Naive thymus-derived CD4-positive, alpha-beta T cell (primary cell): ENCODE measurements at regions of chr18 and their contacts with region 1.

Region 1: GRCh38 chr18:50307738-50308470 is 20.4 kb upstream of the CXXC1 start:
- DNase-seq: peak; percentile 70 to 93 (median 89)
- ATAC-seq: peak; percentile 96
- H3K4me3 ChIP-seq: peak overlapping the region; percentile 45
- H3K4me3 Mint-ChIP-seq: peak overlapping the region; percentile 76 to 97 (median 92)
- H3K27ac ChIP-seq: peak overlapping the region; percentile 65
- H3K27ac Mint-ChIP-seq: peak overlapping the region; percentile 52 to 93 (median 82)
- H3K4me1 ChIP-seq: peaks cover 0 to 8% of the 10 kb centered on the region in 2 donors
- H3K4me1 Mint-ChIP-seq: peaks cover 0 to 20% (median 16%) of the 10 kb centered on the region in 7 donors
- H3K27me3 ChIP-seq: peaks cover 0 to 3% of the 10 kb centered on the region in 2 donors
- H3K27me3 Mint-ChIP-seq: peaks cover 0 to 35% (median 19%) of the 10 kb centered on the region in 5 donors

Region 2: GRCh38 chr18:49319590-49319989 is 988.3 kb before region 1 on chr18:
- CTCF ChIA-PET with region 1: no interaction called
- POLR2A ChIA-PET with region 1: no interaction called
- intact Hi-C with region 1: no loop called
- DNase-seq: no peak
- ATAC-seq: no peak
- H3K4me3 ChIP-seq: no peak overlapping the region
- H3K4me3 Mint-ChIP-seq: no peak overlapping the region
- H3K27ac ChIP-seq: no peak overlapping the region
- H3K27ac Mint-ChIP-seq: peak overlapping the region in 1 of 9 donors; percentile 56
- H3K4me1 ChIP-seq: no peaks in the 10 kb centered on the region
- H3K4me1 Mint-ChIP-seq: peaks cover 0 to 15% (median 5%) of the 10 kb centered on the region in 7 donors
- H3K27me3 ChIP-seq: no peaks in the 10 kb centered on the region
- H3K27me3 Mint-ChIP-seq: no peaks in the 10 kb centered on the region

Region 3: DNA sequence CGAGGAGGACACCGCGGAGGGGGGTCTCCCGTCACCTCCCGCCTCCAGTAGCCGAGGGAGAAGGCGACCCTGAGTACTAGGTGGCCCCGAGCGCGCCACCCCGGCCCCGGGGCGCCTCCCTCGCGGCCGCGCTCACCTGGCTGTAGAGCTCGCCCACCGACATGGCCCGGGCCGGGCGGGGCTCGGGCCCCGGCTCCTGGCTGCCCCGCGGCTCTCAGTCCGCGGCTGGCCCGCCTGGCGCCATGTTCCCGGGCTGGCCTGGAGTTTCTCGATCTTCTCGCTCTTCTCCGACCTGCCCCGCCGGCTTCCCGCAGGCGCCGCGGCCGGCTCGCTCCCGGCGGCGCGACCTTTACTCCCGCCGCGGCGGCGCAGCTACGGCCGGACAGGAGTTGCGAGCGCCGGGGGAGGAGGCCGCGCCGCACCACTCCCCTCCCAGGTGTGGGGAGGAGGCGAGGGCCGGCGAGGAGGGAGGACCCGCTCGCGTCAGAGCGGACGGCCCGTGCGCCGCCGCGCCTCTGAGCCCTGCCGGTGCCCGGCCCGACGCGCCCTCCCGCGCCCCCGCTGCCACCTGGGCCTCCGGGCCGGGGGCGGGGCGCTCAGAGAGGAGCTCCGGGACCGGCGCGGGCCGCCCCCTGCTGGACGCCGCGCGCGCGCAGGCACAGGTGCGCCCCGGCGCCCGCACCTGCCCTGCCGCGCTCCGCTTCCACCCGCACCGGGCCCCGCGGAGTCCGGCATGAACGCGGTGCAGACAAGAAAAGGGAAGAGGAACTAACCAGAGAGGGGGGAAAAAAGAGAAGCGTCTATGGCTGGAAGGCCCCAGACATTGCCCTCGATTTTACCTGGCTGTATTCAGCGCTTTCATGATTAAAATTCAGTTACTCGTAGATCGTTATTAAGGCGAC is 113.0 kb before region 1 on chr18 and contains the start of gene MYO5B:
- CTCF ChIA-PET with region 1: no interaction called
- POLR2A ChIA-PET with region 1: no interaction called
- intact Hi-C with region 1: no loop called
- DNase-seq: peak in 7 of 9 donors; percentile 29 to 70 (median 42)
- ATAC-seq: peak; percentile 90
- H3K4me3 ChIP-seq: peak within 1 kb of the TSS; percentile 13
- H3K4me3 Mint-ChIP-seq: peak within 1 kb of the TSS; percentile 39 to 82 (median 66)
- H3K27ac ChIP-seq: no peak within 1 kb of the TSS
- H3K27ac Mint-ChIP-seq: peak within 1 kb of the TSS in 1 of 9 donors; percentile 59
- H3K4me1 ChIP-seq: peaks cover 0 to 5% of the 10 kb centered on the region in 2 donors
- H3K4me1 Mint-ChIP-seq: peaks cover 6 to 20% (median 17%) of the 10 kb centered on the region in 7 donors
- H3K27me3 ChIP-seq: peaks cover 0 to 18% of the 10 kb centered on the region in 2 donors
- H3K27me3 Mint-ChIP-seq: peaks cover 62 to 79% (median 72%) of the 10 kb centered on the region in 5 donors
- total RNA-seq, gene MYO5B: not detected

Region 4: GRCh38 chr18:50297621-50298442 is 10.1 kb before region 1 on chr18:
- CTCF ChIA-PET with region 1: no interaction called
- POLR2A ChIA-PET with region 1: no interaction called
- intact Hi-C with region 1: loop called (anchors 1 kb)
- DNase-seq: peak in 8 of 9 donors; percentile 48 to 70 (median 68)
- ATAC-seq: peak; percentile 95
- H3K4me3 ChIP-seq: peak overlapping the region; percentile 57
- H3K4me3 Mint-ChIP-seq: peak overlapping the region; percentile 52 to 90 (median 84)
- H3K27ac ChIP-seq: no peak overlapping the region
- H3K27ac Mint-ChIP-seq: peak overlapping the region in 4 of 9 donors; percentile 43 to 76 (median 59)
- H3K4me1 ChIP-seq: peaks cover 0 to 11% of the 10 kb centered on the region in 2 donors
- H3K4me1 Mint-ChIP-seq: peaks cover 4 to 14% (median 7%) of the 10 kb centered on the region in 7 donors
- H3K27me3 ChIP-seq: no peaks in the 10 kb centered on the region
- H3K27me3 Mint-ChIP-seq: peaks cover 10 to 48% (median 19%) of the 10 kb centered on the region in 5 donors

Region 5: GRCh38 chr18:50320719-50321118 is 12.8 kb after region 1 on chr18:
- CTCF ChIA-PET with region 1: no interaction called
- POLR2A ChIA-PET with region 1: no interaction called
- intact Hi-C with region 1: loop called in 1 of 2 experiments (anchors 1 kb)
- DNase-seq: peak in 2 of 9 donors; percentile 6 to 16
- ATAC-seq: no peak
- H3K4me3 ChIP-seq: no peak overlapping the region
- H3K4me3 Mint-ChIP-seq: peak overlapping the region in 8 of 10 donors; percentile 23 to 65 (median 56)
- H3K27ac ChIP-seq: no peak overlapping the region
- H3K27ac Mint-ChIP-seq: peak overlapping the region in 4 of 9 donors; percentile 32 to 68 (median 64)
- H3K4me1 ChIP-seq: no peaks in the 10 kb centered on the region
- H3K4me1 Mint-ChIP-seq: peaks cover 2 to 27% (median 9%) of the 10 kb centered on the region in 7 donors
- H3K27me3 ChIP-seq: no peaks in the 10 kb centered on the region
- H3K27me3 Mint-ChIP-seq: peaks cover 0 to 27% (median 6%) of the 10 kb centered on the region in 5 donors

Region 6: DNA sequence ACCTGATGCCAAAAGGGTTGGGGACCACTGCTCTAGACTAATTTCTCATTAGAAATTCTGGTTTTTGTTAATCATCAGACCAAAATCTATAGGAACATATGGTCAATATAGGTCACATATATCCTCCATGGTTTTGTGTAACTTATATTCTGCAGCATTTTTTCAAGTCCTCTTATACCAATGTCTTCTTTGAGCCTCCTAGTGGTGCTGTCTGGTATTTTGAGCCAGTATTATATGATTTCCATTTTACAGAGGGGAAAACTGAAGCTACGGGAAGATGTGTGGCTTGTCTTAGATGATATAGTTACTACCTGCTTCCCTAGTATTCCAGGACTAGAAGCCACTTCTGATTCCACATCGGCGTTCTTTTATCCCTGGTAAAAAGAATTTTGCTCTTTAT is 265.8 kb after region 1 on chr18:
- CTCF ChIA-PET with region 1: no interaction called
- POLR2A ChIA-PET with region 1: no interaction called
- intact Hi-C with region 1: no loop called
- DNase-seq: no peak
- ATAC-seq: no peak
- H3K4me3 ChIP-seq: no peak overlapping the region
- H3K4me3 Mint-ChIP-seq: no peak overlapping the region
- H3K27ac ChIP-seq: no peak overlapping the region
- H3K27ac Mint-ChIP-seq: no peak overlapping the region
- H3K4me1 ChIP-seq: no peaks in the 10 kb centered on the region
- H3K4me1 Mint-ChIP-seq: no peaks in the 10 kb centered on the region
- H3K27me3 ChIP-seq: no peaks in the 10 kb centered on the region
- H3K27me3 Mint-ChIP-seq: peaks cover 5 to 56% (median 30%) of the 10 kb centered on the region in 5 donors

Region 7: DNA sequence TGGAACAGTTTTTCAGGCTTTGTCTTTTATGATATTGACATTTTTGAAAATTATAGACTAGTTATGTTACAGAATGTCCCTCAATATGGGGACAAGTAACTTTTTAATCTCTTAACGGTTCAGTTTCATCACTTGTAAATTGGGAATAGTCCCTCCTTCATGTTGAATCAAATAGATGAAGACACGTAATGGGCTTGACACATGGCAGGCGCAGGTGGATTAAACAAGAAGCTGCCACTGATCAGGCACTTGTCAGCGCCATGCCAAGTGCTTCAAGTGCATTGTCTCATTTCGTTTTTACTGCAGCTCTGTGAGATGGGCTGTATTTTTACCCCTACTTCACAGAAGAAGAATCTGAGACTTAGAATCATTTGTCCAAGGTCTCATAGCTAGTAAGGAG is 712.6 kb after region 1 on chr18:
- CTCF ChIA-PET with region 1: no interaction called
- POLR2A ChIA-PET with region 1: no interaction called
- intact Hi-C with region 1: no loop called
- DNase-seq: no peak
- ATAC-seq: no peak
- H3K4me3 ChIP-seq: no peak overlapping the region
- H3K4me3 Mint-ChIP-seq: no peak overlapping the region
- H3K27ac ChIP-seq: no peak overlapping the region
- H3K27ac Mint-ChIP-seq: no peak overlapping the region
- H3K4me1 ChIP-seq: peaks cover 0 to 5% of the 10 kb centered on the region in 2 donors
- H3K4me1 Mint-ChIP-seq: peaks cover 3 to 9% (median 6%) of the 10 kb centered on the region in 7 donors
- H3K27me3 ChIP-seq: no peaks in the 10 kb centered on the region
- H3K27me3 Mint-ChIP-seq: no peaks in the 10 kb centered on the region